ENCODE measurements at regions of chr10 and their contacts with region 1.

Region 1: DNA sequence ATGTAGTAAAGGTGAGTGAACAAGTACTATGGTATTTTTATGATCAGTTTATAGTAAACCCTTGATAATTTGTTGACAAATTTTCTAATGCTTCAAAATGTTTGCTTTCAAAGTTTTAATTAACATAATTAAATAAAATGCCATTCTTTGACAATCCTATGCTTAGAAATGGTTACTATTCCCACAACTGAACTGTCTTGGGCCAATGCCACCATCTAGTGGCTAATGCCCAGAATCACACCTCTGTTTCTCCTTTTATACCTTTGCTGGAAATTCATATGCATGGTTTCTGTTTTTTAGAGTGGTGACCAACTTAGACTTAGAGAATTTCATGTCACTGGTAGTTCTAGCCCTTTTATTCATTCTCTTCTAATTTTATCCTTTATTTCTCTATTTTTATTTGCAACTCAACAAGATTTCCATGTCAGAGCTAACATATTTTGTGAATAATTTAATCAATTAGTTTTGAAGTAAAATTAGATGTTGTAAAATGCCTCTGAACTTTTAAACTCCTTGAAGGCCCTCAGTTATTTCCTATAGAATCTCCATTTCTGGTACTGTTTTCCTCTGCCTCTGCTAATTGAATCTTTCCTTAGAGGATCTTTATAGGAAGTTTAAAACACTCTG is 31.1 kb downstream of the PCGF5 start:
- DNase-seq: peak; percentile 61
- H3K4me3 ChIP-seq: no peak overlapping the region
- H3K27ac ChIP-seq: no peak overlapping the region
- H3K4me1 ChIP-seq: peaks cover 12% of the 10 kb centered on the region
- H3K27me3 ChIP-seq: no peaks in the 10 kb centered on the region
- CTCF ChIP-seq: peak; percentile 61 to 70
- POLR2A ChIP-seq: no peak

Region 2: GRCh38 chr10:90451283-90451682 is 800.3 kb before region 1 on chr10:
- CTCF ChIA-PET with region 1: no interaction called
- POLR2A ChIA-PET with region 1: no interaction called
- dilution Hi-C with region 1: no loop called
- intact Hi-C with region 1: no loop called
- DNase-seq: peak; percentile 60
- H3K4me3 ChIP-seq: no peak overlapping the region
- H3K27ac ChIP-seq: no peak overlapping the region
- H3K4me1 ChIP-seq: peaks cover 17% of the 10 kb centered on the region
- H3K27me3 ChIP-seq: peaks cover 0 to 4% of the 10 kb centered on the region in 2 experiments
- CTCF ChIP-seq: no peak
- POLR2A ChIP-seq: no peak

Region 3: GRCh38 chr10:90879062-90879461 is 372.5 kb before region 1 on chr10:
- CTCF ChIA-PET with region 1: interaction called, 73 read pairs
- POLR2A ChIA-PET with region 1: no interaction called
- dilution Hi-C with region 1: loop called (anchors 25 kb)
- intact Hi-C with region 1: loop called (anchors 1 kb)
- DNase-seq: no peak
- H3K4me3 ChIP-seq: no peak overlapping the region
- H3K27ac ChIP-seq: no peak overlapping the region
- H3K4me1 ChIP-seq: no peaks in the 10 kb centered on the region
- H3K27me3 ChIP-seq: no peaks in the 10 kb centered on the region
- CTCF ChIP-seq: no peak
- POLR2A ChIP-seq: no peak

Region 4: GRCh38 chr10:90912174-90912573 is 339.4 kb before region 1 on chr10:
- CTCF ChIA-PET with region 1: interaction called, 165 read pairs
- POLR2A ChIA-PET with region 1: interaction called, 21 read pairs
- dilution Hi-C with region 1: no loop called
- intact Hi-C with region 1: loop called (anchors 1 kb)
- DNase-seq: no peak
- H3K4me3 ChIP-seq: no peak overlapping the region
- H3K27ac ChIP-seq: peak overlapping the region; percentile 25
- H3K4me1 ChIP-seq: peaks cover 44% of the 10 kb centered on the region
- H3K27me3 ChIP-seq: no peaks in the 10 kb centered on the region
- CTCF ChIP-seq: no peak
- POLR2A ChIP-seq: no peak

Region 5: DNA sequence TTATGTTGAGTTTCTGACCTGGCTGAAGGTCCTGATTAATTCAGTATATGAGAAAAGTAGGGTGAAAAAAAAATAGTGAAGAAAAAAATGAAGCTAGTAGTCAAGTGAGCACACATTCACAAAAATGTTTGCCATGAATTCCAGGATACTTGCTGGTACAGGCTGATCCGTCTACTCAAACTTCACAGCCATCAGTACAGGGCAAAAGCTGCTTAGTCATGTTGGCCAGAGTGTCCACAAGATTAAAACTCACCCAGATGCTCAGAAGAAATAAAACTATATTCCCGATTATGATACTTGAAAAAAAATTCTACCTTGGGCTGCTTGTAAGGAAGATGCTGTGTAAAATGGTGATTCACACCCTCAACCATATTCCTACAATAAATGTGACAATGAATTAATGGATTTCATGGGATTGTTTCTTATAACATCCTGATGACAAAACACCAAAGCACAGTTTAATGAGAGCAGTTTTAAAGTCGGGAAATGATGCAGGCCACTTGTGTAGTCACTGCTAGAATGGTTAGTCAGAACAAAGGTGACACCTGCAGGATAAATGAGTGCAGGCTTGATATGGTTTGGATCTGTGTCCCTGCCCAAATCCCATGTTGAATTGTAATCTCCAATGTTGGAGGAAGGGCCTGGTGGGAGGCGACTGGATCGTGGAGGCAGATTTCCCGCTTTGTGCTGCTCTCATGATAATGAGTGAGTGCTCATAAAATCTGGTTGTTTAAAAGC is 281.4 kb before region 1 on chr10:
- CTCF ChIA-PET with region 1: interaction called, 11 read pairs
- POLR2A ChIA-PET with region 1: no interaction called
- dilution Hi-C with region 1: no loop called
- intact Hi-C with region 1: no loop called
- DNase-seq: no peak
- H3K4me3 ChIP-seq: no peak overlapping the region
- H3K27ac ChIP-seq: peak overlapping the region; percentile 28
- H3K4me1 ChIP-seq: peaks cover 8% of the 10 kb centered on the region
- H3K27me3 ChIP-seq: no peaks in the 10 kb centered on the region
- CTCF ChIP-seq: no peak
- POLR2A ChIP-seq: no peak

Region 6: DNA sequence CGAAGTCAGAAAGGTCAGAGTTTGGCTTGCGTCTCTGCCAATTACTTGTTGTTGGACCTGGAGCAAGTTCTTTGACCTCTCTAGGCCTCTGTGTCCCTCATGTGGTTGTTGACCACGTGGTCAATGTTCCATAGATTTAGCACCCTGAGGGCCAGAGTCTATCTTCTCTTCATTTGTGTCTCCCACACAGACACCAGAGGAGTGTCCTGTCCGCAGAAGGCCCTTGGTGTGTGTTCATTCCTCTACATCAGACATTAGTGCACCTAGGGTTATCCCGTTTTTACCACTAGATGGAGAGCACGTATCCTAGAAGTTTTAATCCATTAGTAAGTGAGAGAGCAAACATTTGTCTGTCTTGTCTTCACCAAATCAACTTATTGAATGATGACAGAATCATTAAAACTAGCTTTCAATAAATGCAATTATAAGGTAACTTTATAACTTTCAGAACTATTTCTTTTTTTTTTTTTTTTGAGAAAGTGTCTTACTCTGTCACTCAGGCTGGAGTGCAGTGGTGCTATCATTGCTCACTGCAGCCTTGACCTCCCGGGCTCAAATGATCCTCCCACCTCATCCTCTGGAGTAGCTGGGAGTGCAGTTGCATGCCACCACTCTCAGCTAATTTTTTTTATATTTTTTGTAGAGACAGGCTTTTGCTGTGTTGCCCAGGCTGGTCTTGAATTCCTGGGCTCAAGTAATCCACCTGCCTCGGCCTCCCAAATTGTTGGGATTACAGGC is 208.2 kb before region 1 on chr10:
- CTCF ChIA-PET with region 1: interaction called, 13 read pairs
- POLR2A ChIA-PET with region 1: no interaction called
- dilution Hi-C with region 1: no loop called
- intact Hi-C with region 1: loop called (anchors 1 kb)
- DNase-seq: peak; percentile 56
- H3K4me3 ChIP-seq: no peak overlapping the region
- H3K27ac ChIP-seq: no peak overlapping the region
- H3K4me1 ChIP-seq: no peaks in the 10 kb centered on the region
- H3K27me3 ChIP-seq: no peaks in the 10 kb centered on the region
- CTCF ChIP-seq: peak; percentile 34 to 37
- POLR2A ChIP-seq: no peak